ENCODE measurements at regions of chr16 and their contacts with region 1.

Region 1: GRCh38 chr16:70345840-70346239 is 863 bp upstream of the DDX19A start:
- DNase-seq: no peak
- ATAC-seq: no peak
- H3K4me3 ChIP-seq: peak overlapping the region; percentile 72
- H3K27ac ChIP-seq: peak overlapping the region; percentile 85
- H3K4me1 ChIP-seq: peaks cover 4% of the 10 kb centered on the region
- H3K27me3 ChIP-seq: no peaks in the 10 kb centered on the region
- CTCF ChIP-seq: no peak
- EP300 ChIP-seq: no peak
- POLR2A ChIP-seq: no peak
- RAD21 ChIP-seq: no peak

Region 2: GRCh38 chr16:69917739-69918138 is 428.1 kb before region 1 on chr16:
- CTCF ChIA-PET with region 1: no interaction called
- POLR2A ChIA-PET with region 1: no interaction called
- RAD21 ChIA-PET with region 1: no interaction called
- SMC1A ChIA-PET with region 1: no interaction called
- in situ Hi-C with region 1: no loop called
- intact Hi-C with region 1: no loop called
- DNase-seq: no peak
- ATAC-seq: no peak
- H3K4me3 ChIP-seq: no peak overlapping the region
- H3K27ac ChIP-seq: no peak overlapping the region
- H3K4me1 ChIP-seq: no peaks in the 10 kb centered on the region
- H3K27me3 ChIP-seq: no peaks in the 10 kb centered on the region
- CTCF ChIP-seq: no peak
- EP300 ChIP-seq: no peak
- POLR2A ChIP-seq: no peak
- RAD21 ChIP-seq: no peak

Region 3: GRCh38 chr16:70289229-70290098 is 56.4 kb before region 1 on chr16 and contains the start of gene AARS1:
- CTCF ChIA-PET with region 1: interaction called, 4 read pairs
- POLR2A ChIA-PET with region 1: interaction called, 6 read pairs
- RAD21 ChIA-PET with region 1: interaction called, 3 read pairs
- SMC1A ChIA-PET with region 1: interaction called, 6 read pairs
- in situ Hi-C with region 1: no loop called
- intact Hi-C with region 1: loop called (anchors 2 kb)
- DNase-seq: peak; percentile 98
- ATAC-seq: peak; percentile 99
- H3K4me3 ChIP-seq: peak within 1 kb of the TSS; percentile 100
- H3K27ac ChIP-seq: peak within 1 kb of the TSS; percentile 89
- H3K4me1 ChIP-seq: peaks cover 7% of the 10 kb centered on the region
- H3K27me3 ChIP-seq: no peaks in the 10 kb centered on the region
- CTCF ChIP-seq: no peak
- EP300 ChIP-seq: no peak
- POLR2A ChIP-seq: peak; percentile 97
- RAD21 ChIP-seq: no peak
- polyA plus RNA-seq, gene AARS1: 21.5 to 47.7 TPM

Region 4: GRCh38 chr16:70298988-70299938 is 46.6 kb before region 1 on chr16 and contains the start of gene DDX19B:
- CTCF ChIA-PET with region 1: interaction called, 9 read pairs
- POLR2A ChIA-PET with region 1: interaction called, 9 read pairs
- RAD21 ChIA-PET with region 1: interaction called, 5 read pairs
- SMC1A ChIA-PET with region 1: interaction called, 11 read pairs
- in situ Hi-C with region 1: no loop called
- intact Hi-C with region 1: no loop called
- DNase-seq: no peak
- ATAC-seq: peak; percentile 98
- H3K4me3 ChIP-seq: peak within 1 kb of the TSS; percentile 98
- H3K27ac ChIP-seq: peak within 1 kb of the TSS; percentile 93
- H3K4me1 ChIP-seq: peaks cover 7% of the 10 kb centered on the region
- H3K27me3 ChIP-seq: no peaks in the 10 kb centered on the region
- CTCF ChIP-seq: no peak; a peak in 1 of 6 replicates
- EP300 ChIP-seq: no peak
- POLR2A ChIP-seq: peak; percentile 98
- RAD21 ChIP-seq: no peak
- polyA plus RNA-seq, gene DDX19B: 14.1 to 17.6 TPM